HepG2 (cell line): ENCODE measurements at regions of chr7 and their contacts with region 1.

Region 1: GRCh38 chr7:56009695-56010094 is 41.5 kb downstream of the PSPH start:
- DNase-seq: peak; percentile 65
- ATAC-seq: peak; percentile 5; the same call in 2 of the 3 replicates
- H3K4me3 ChIP-seq: no peak overlapping the region
- H3K27ac ChIP-seq: peak overlapping the region; percentile 65
- H3K4me1 ChIP-seq: peaks cover 63% of the 10 kb centered on the region
- H3K27me3 ChIP-seq: no peaks in the 10 kb centered on the region
- CTCF ChIP-seq: no peak
- EP300 ChIP-seq: no peak
- POLR2A ChIP-seq: peak in 1 of 2 experiments; percentile 47; a peak in 1 of 4 replicates
- RAD21 ChIP-seq: no peak

Region 2: GRCh38 chr7:55996856-55997500 is 12.7 kb before region 1 on chr7:
- CTCF ChIA-PET with region 1: no interaction called
- POLR2A ChIA-PET with region 1: interaction called, 13 read pairs
- in situ Hi-C with region 1: no loop called
- intact Hi-C with region 1: no loop called
- DNase-seq: peak; percentile 91
- ATAC-seq: peak; percentile 87
- H3K4me3 ChIP-seq: no peak overlapping the region; a peak in 1 of 6 replicates
- H3K27ac ChIP-seq: peak overlapping the region; percentile 64
- H3K4me1 ChIP-seq: peaks cover 53% of the 10 kb centered on the region
- H3K27me3 ChIP-seq: no peaks in the 10 kb centered on the region
- CTCF ChIP-seq: 0 out of 2 replicates have a peak, but pooled peaks have one; percentile 11
- EP300 ChIP-seq: peak; percentile 32 to 33; a peak in 1 of 4 replicates
- POLR2A ChIP-seq: no peak
- RAD21 ChIP-seq: no peak

Region 3: GRCh38 chr7:56033671-56034432 is 24.2 kb after region 1 on chr7:
- CTCF ChIA-PET with region 1: no interaction called
- POLR2A ChIA-PET with region 1: interaction called, 55 read pairs
- in situ Hi-C with region 1: no loop called
- intact Hi-C with region 1: loop called (anchors 1 kb)
- DNase-seq: peak; percentile 88
- ATAC-seq: peak; percentile 89
- H3K4me3 ChIP-seq: peak overlapping the region; percentile 77 to 98 (median 80)
- H3K27ac ChIP-seq: peak overlapping the region; percentile 87
- H3K4me1 ChIP-seq: peaks cover 45% of the 10 kb centered on the region
- H3K27me3 ChIP-seq: no peaks in the 10 kb centered on the region; a peak in 1 of 5 replicates
- CTCF ChIP-seq: peak; percentile 34
- EP300 ChIP-seq: no peak
- POLR2A ChIP-seq: peak; percentile 66 to 85
- RAD21 ChIP-seq: peak; percentile 10; the same call in 1 of the 2 replicates

Region 4: GRCh38 chr7:56063882-56064625 is 54.4 kb after region 1 on chr7 and contains the start of gene SUMF2:
- CTCF ChIA-PET with region 1: no interaction called
- POLR2A ChIA-PET with region 1: interaction called, 65 read pairs
- in situ Hi-C with region 1: no loop called
- intact Hi-C with region 1: no loop called
- DNase-seq: peak; percentile 83
- ATAC-seq: peak; percentile 97
- H3K4me3 ChIP-seq: peak within 1 kb of the TSS; percentile 59 to 91 (median 79); a peak in 5 of 6 replicates
- H3K27ac ChIP-seq: peak within 1 kb of the TSS; percentile 90
- H3K4me1 ChIP-seq: peaks cover 63% of the 10 kb centered on the region
- H3K27me3 ChIP-seq: no peaks in the 10 kb centered on the region
- CTCF ChIP-seq: peak; percentile 63
- EP300 ChIP-seq: no peak
- POLR2A ChIP-seq: peak; percentile 71 to 92
- RAD21 ChIP-seq: peak; percentile 69
- total RNA-seq, gene SUMF2: 22.4 and 54.4 TPM in 2 replicates